ENCODE measurements at regions of chr11 and their contacts with region 1.

Region 1: GRCh38 chr11:66311965-66312548 is 4.8 kb downstream of the CD248 start:
- DNase-seq: peak; percentile 95 to 100 (median 100)
- ATAC-seq: peak; percentile 70 to 76
- H3K4me3 Mint-ChIP-seq: peak overlapping the region; percentile 73 to 99 (median 96)
- H3K27ac Mint-ChIP-seq: peak overlapping the region; percentile 92 to 100 (median 99)
- H3K4me1 Mint-ChIP-seq: peaks cover 16 to 28% (median 20%) of the 10 kb centered on the region in 4 donors
- H3K27me3 Mint-ChIP-seq: no peaks in the 10 kb centered on the region

Region 2: GRCh38 chr11:66288671-66289547 is 23.1 kb before region 1 on chr11 and contains the start of gene YIF1A:
- POLR2A ChIA-PET with region 1: interaction called, 16 read pairs
- DNase-seq: peak; percentile 94 to 99 (median 98)
- ATAC-seq: peak; percentile 90 to 94
- H3K4me3 Mint-ChIP-seq: peak within 1 kb of the TSS; percentile 84 to 96 (median 92)
- H3K27ac Mint-ChIP-seq: peak within 1 kb of the TSS; percentile 88 to 97 (median 94)
- H3K4me1 Mint-ChIP-seq: peaks cover 19 to 51% (median 45%) of the 10 kb centered on the region in 4 donors
- H3K27me3 Mint-ChIP-seq: peaks cover 2 to 20% (median 13%) of the 10 kb centered on the region in 5 donors
- polyA plus RNA-seq, gene YIF1A: 49.1 to 59.9 (median 53.9) TPM

Region 3: GRCh38 chr11:66336234-66337102 is 24.4 kb after region 1 on chr11 and contains the start of gene RIN1:
- POLR2A ChIA-PET with region 1: interaction called, 45 read pairs
- DNase-seq: peak in 9 of 10 donors; percentile 12 to 80 (median 62)
- ATAC-seq: peak; percentile 81 to 86
- H3K4me3 Mint-ChIP-seq: peak within 1 kb of the TSS; percentile 89 to 96 (median 92)
- H3K27ac Mint-ChIP-seq: peak within 1 kb of the TSS; percentile 35 to 96 (median 92)
- H3K4me1 Mint-ChIP-seq: peaks cover 15 to 30% (median 24%) of the 10 kb centered on the region in 4 donors
- H3K27me3 Mint-ChIP-seq: no peaks in the 10 kb centered on the region
- polyA plus RNA-seq, gene RIN1: 2.7 to 6.5 (median 3.7) TPM

Region 4: GRCh38 chr11:66371627-66372415 is 59.8 kb after region 1 on chr11 and contains the start of gene SLC29A2:
- POLR2A ChIA-PET with region 1: interaction called, 28 read pairs
- DNase-seq: peak; percentile 65 to 89 (median 82)
- ATAC-seq: peak; percentile 80 to 83
- H3K4me3 Mint-ChIP-seq: peak within 1 kb of the TSS; percentile 77 to 95 (median 91)
- H3K27ac Mint-ChIP-seq: peak within 1 kb of the TSS; percentile 80 to 98 (median 94)
- H3K4me1 Mint-ChIP-seq: peaks cover 6 to 17% (median 12%) of the 10 kb centered on the region in 4 donors
- H3K27me3 Mint-ChIP-seq: no peaks in the 10 kb centered on the region
- polyA plus RNA-seq, gene SLC29A2: 1.4 to 3.9 (median 2.3) TPM